ENCODE measurements at regions of chr20 and their contacts with region 1.

Region 1: GRCh38 chr20:4592316-4593148 is 129.2 kb upstream of the PRND start:
- DNase-seq: peak; percentile 63
- ATAC-seq: peak; percentile 82
- H3K4me3 ChIP-seq: peak overlapping the region in 4 of 5 experiments; percentile 37 to 50 (median 45)
- H3K4me3 Mint-ChIP-seq: peak overlapping the region; percentile 74
- H3K27ac ChIP-seq: no peak overlapping the region
- H3K27ac Mint-ChIP-seq: no peak overlapping the region
- H3K4me1 ChIP-seq: peaks cover 9 to 10% of the 10 kb centered on the region in 2 donors
- H3K4me1 Mint-ChIP-seq: peaks cover 7% of the 10 kb centered on the region
- H3K27me3 ChIP-seq: peaks cover 0 to 15% (median 6%) of the 10 kb centered on the region in 4 experiments
- H3K27me3 Mint-ChIP-seq: peaks cover 31% of the 10 kb centered on the region
- CTCF ChIP-seq: peak; percentile 98

Region 2: DNA sequence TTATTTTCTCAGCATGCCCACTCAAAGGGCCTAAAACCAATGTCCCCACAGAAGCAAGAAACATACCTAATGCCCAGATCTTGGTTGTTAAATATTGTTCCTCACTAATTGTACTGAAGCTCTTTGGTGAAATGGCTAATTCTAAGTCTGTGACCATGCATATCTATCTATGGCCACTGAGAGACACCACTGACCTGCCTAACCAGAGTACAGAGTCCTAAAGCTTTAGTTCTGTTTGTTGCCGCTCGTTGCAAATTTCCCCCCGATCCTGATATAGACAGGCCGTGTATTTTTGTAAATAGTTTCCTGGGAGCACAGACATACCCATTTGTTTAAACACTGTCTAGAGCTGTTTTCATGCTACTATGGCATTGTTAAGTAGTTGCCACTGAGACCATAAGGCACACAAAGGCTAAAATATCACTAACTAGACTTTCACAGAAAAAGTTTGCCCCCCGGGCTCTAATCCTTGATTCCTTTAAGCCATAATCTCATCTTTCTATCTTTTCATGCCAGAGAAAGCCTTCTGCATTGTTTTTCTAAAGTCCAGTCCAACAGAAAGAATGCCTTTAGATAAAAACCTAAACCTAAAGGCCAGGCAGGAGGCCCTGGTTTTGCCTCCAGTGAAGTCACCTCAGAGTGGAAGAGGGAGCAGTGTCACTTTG is 1233.7 kb before region 1 on chr20:
- CTCF ChIA-PET with region 1: no interaction called
- POLR2A ChIA-PET with region 1: no interaction called
- intact Hi-C with region 1: no loop called
- DNase-seq: no peak
- ATAC-seq: no peak
- H3K4me3 ChIP-seq: no peak overlapping the region
- H3K4me3 Mint-ChIP-seq: no peak overlapping the region
- H3K27ac ChIP-seq: no peak overlapping the region
- H3K27ac Mint-ChIP-seq: no peak overlapping the region
- H3K4me1 ChIP-seq: no peaks in the 10 kb centered on the region
- H3K4me1 Mint-ChIP-seq: no peaks in the 10 kb centered on the region
- H3K27me3 ChIP-seq: no peaks in the 10 kb centered on the region
- H3K27me3 Mint-ChIP-seq: no peaks in the 10 kb centered on the region
- CTCF ChIP-seq: no peak

Region 3: DNA sequence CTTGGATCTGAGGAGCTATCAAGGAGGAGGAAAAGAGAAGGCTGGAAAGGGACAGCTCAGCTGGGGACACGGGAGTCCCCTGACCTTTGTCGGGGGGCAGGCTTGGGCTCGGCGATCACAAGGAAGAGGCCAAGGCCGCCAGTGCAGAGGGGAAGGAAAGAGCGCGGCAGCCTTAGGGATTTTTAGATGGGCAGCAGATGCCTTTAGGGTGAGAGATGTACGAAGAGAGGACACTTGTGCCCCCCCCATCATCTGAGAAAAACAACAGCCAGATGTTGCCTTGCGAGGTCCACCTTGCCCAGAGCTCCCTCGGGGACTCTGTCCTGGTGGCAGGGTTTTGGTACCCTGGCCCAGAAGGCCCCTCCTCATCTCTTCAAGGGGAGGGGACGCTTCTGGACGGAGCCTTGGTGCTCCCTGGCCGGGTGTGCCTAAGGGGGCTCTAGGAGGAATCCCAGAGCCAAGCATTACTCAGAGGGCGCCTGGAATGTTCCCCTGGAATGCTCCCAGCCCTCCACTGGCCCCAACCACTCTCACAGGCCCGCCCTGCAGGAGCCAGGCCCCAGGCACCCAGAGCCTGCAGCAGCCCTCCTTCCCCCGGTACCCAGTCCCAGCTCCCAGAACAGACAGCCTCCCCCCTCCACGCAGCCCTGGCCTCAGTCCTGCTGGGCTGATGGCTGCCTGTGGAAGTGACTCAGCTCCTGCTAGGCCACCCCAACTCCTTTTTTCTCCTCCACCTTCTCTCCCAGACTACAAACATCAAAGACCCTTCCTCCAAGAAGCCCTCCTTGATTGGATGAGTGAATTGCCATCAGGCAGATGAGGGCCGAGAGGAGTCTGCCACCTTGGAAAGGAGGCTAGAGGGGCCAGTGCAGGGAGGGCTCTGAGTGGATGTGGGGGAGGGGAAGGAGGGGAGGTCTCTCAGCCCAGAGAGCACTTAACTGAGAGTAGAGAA is 912.5 kb before region 1 on chr20:
- CTCF ChIA-PET with region 1: no interaction called
- POLR2A ChIA-PET with region 1: no interaction called
- intact Hi-C with region 1: loop called (anchors 5 kb)
- DNase-seq: no peak
- ATAC-seq: no peak
- H3K4me3 ChIP-seq: no peak overlapping the region
- H3K4me3 Mint-ChIP-seq: no peak overlapping the region
- H3K27ac ChIP-seq: no peak overlapping the region
- H3K27ac Mint-ChIP-seq: no peak overlapping the region
- H3K4me1 ChIP-seq: peaks cover 0 to 7% of the 10 kb centered on the region in 2 donors
- H3K4me1 Mint-ChIP-seq: peaks cover 4% of the 10 kb centered on the region
- H3K27me3 ChIP-seq: peaks cover 0 to 38% (median 6%) of the 10 kb centered on the region in 4 experiments
- H3K27me3 Mint-ChIP-seq: peaks cover 57% of the 10 kb centered on the region
- CTCF ChIP-seq: no peak

Region 4: GRCh38 chr20:4607287-4607713 is 14.8 kb after region 1 on chr20:
- CTCF ChIA-PET with region 1: interaction called, 17 read pairs
- POLR2A ChIA-PET with region 1: no interaction called
- intact Hi-C with region 1: no loop called
- DNase-seq: peak; percentile 79
- ATAC-seq: peak; percentile 94
- H3K4me3 ChIP-seq: no peak overlapping the region
- H3K4me3 Mint-ChIP-seq: no peak overlapping the region
- H3K27ac ChIP-seq: no peak overlapping the region
- H3K27ac Mint-ChIP-seq: peak overlapping the region; percentile 32
- H3K4me1 ChIP-seq: peaks cover 5 to 7% of the 10 kb centered on the region in 2 donors
- H3K4me1 Mint-ChIP-seq: peaks cover 12% of the 10 kb centered on the region
- H3K27me3 ChIP-seq: peaks cover 0 to 12% (median 0%) of the 10 kb centered on the region in 4 experiments
- H3K27me3 Mint-ChIP-seq: peaks cover 15% of the 10 kb centered on the region
- CTCF ChIP-seq: peak; percentile 99

Region 5: GRCh38 chr20:5041433-5041832 is 448.9 kb after region 1 on chr20:
- CTCF ChIA-PET with region 1: no interaction called
- POLR2A ChIA-PET with region 1: no interaction called
- intact Hi-C with region 1: loop called (anchors 10 kb)
- DNase-seq: no peak
- ATAC-seq: peak; percentile 24
- H3K4me3 ChIP-seq: no peak overlapping the region
- H3K4me3 Mint-ChIP-seq: no peak overlapping the region
- H3K27ac ChIP-seq: no peak overlapping the region
- H3K27ac Mint-ChIP-seq: no peak overlapping the region
- H3K4me1 ChIP-seq: no peaks in the 10 kb centered on the region
- H3K4me1 Mint-ChIP-seq: peaks cover 18% of the 10 kb centered on the region
- H3K27me3 ChIP-seq: no peaks in the 10 kb centered on the region
- H3K27me3 Mint-ChIP-seq: no peaks in the 10 kb centered on the region
- CTCF ChIP-seq: no peak